ENCODE measurements at regions of chr19 and their contacts with region 1.

Region 1: DNA sequence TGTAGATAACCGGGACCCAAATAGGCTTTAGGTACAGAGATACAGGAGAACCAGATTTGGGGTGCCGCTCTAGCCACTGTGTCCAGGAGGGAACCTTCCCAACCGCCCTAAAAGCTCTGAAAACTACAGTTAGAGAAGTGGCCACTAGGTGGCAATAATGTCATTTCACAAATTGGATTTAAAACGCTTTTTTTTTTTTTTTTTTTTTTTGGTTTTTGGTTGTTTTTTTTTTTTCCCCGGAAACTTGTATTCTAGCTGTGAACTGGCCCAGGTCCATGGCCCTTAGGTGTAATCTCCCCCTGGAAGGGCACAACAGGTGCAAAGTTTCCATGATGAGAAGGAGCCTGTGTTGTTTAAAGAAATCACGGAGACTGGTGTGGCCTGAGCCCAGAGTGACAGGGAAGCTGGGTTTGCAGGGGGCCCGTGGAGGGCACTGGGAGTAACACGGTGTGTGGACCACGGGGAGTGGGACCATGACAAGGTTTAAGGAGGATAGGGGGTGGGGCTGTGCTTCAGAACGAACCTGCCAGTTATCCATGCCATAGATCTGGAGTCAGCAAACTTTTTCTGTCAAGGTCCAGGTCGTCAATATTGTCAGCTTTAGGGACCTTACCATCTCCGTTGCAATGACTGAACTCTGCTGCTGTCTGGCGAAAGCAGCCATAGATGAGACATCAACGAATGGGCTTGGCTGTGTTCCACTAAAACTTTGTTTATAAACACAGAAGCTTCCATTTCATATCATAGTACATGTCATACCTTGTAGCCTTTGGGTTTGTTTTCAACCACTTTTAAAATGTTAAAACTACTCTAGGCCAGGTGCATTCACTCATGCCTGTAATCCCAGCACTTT is 10.1 kb downstream of the OR1I1 start:
- DNase-seq: peak; percentile 84 to 88 (median 84)
- H3K4me3 ChIP-seq: peak overlapping the region in 1 of 7 experiments; percentile 42
- H3K27ac ChIP-seq: no peak overlapping the region
- H3K4me1 ChIP-seq: peaks cover 0 to 9% (median 4%) of the 10 kb centered on the region in 4 experiments
- H3K27me3 ChIP-seq: peaks cover 0 to 3% (median 0%) of the 10 kb centered on the region in 5 experiments

Region 2: DNA sequence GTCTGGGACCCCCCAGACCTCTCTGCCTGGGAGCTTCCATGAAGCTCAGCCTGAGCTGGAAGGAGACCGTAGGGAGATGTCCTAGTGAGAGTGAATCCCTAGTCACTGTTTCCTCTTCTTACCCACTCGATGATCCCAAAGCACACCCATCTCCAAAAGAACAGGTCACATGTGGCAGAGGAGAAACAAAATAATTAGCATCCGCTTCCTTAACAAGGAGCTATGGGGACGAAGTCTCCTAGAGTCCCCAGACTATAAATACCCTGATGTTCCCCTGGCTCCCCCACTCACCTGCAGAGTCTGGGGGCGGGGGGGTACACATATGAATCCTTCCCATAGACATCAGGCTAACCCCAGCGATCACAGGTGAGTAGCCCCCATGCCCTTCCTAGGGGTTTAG is 10.2 kb before region 1 on chr19 and contains the start of gene OR1I1:
- CTCF ChIA-PET with region 1: interaction called, 18 read pairs
- POLR2A ChIA-PET with region 1: interaction called, 4 read pairs
- DNase-seq: no peak
- H3K4me3 ChIP-seq: no peak within 1 kb of the TSS
- H3K27ac ChIP-seq: no peak within 1 kb of the TSS
- H3K4me1 ChIP-seq: no peaks in the 10 kb centered on the region
- H3K27me3 ChIP-seq: peaks cover 0 to 6% (median 0%) of the 10 kb centered on the region in 5 experiments

Region 3: GRCh38 chr19:15120135-15121026 is 28.3 kb after region 1 on chr19:
- CTCF ChIA-PET with region 1: no interaction called
- POLR2A ChIA-PET with region 1: no interaction called
- DNase-seq: no peak
- H3K4me3 ChIP-seq: no peak overlapping the region
- H3K27ac ChIP-seq: no peak overlapping the region
- H3K4me1 ChIP-seq: peaks cover 0 to 39% (median 24%) of the 10 kb centered on the region in 4 experiments
- H3K27me3 ChIP-seq: no peaks in the 10 kb centered on the region

Region 4: GRCh38 chr19:15149737-15150136 is 57.6 kb after region 1 on chr19:
- CTCF ChIA-PET with region 1: interaction called, 17 read pairs
- POLR2A ChIA-PET with region 1: interaction called, 3 read pairs
- DNase-seq: no peak
- H3K4me3 ChIP-seq: no peak overlapping the region
- H3K27ac ChIP-seq: no peak overlapping the region
- H3K4me1 ChIP-seq: no peaks in the 10 kb centered on the region
- H3K27me3 ChIP-seq: peaks cover 0 to 2% (median 0%) of the 10 kb centered on the region in 5 experiments

Region 5: GRCh38 chr19:15210323-15210781 is 118.2 kb after region 1 on chr19:
- CTCF ChIA-PET with region 1: no interaction called
- POLR2A ChIA-PET with region 1: no interaction called
- DNase-seq: peak; percentile 79 to 91 (median 90)
- H3K4me3 ChIP-seq: peak overlapping the region in 1 of 7 experiments; percentile 10
- H3K27ac ChIP-seq: no peak overlapping the region
- H3K4me1 ChIP-seq: peaks cover 2 to 18% (median 7%) of the 10 kb centered on the region in 4 experiments
- H3K27me3 ChIP-seq: peaks cover 0 to 2% (median 0%) of the 10 kb centered on the region in 5 experiments

Measured in common myeloid progenitor, CD34-positive (primary cell).